ENCODE measurements at regions of chr3 and their contacts with region 1.

Region 1: DNA sequence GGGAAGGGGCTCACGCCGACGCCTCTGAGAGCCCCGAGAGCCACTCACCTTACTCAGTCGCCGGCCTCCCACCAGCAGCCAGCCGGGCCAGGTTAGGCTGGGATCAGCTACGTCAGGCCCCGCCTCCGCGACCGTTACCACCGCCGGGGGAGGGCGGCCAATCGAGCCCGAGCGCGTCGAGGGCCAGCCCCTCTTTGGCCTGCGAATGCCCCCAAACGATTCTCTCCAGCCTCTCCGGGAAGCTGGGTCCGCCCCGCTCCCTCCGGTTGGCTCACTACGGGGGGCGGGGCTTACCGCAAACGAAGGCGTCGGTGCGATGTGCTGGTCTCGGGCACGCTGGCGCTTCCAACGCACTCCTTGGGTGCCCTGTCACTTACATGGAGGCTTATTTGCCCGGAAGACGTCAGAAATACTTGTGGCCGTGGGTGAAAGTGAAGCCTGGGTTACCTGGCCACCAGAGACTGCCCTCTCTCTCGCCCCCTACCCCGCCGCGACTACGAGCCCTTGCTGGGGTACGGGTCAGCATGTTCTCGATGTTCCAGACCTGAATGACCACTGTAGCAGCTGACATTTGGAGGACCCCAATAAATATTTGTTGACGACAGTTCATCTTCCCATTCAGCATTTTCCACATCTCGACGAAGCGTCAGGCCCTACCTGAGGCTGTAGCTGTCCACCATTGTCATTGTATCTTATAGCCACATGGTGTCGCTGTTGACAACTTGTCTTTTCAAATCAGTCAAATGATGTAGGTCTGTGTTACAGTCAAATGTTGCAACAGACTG is at the start of gene CEP70:
- DNase-seq: peak; percentile 96
- H3K4me3 Mint-ChIP-seq: peak within 1 kb of the TSS; percentile 88
- H3K27ac Mint-ChIP-seq: peak within 1 kb of the TSS; percentile 92
- H3K4me1 Mint-ChIP-seq: peaks cover 8% of the 10 kb centered on the region
- H3K27me3 Mint-ChIP-seq: no peaks in the 10 kb centered on the region
- total RNA-seq, gene CEP70: 3.7 and 4.8 TPM in 2 replicates

Region 2: DNA sequence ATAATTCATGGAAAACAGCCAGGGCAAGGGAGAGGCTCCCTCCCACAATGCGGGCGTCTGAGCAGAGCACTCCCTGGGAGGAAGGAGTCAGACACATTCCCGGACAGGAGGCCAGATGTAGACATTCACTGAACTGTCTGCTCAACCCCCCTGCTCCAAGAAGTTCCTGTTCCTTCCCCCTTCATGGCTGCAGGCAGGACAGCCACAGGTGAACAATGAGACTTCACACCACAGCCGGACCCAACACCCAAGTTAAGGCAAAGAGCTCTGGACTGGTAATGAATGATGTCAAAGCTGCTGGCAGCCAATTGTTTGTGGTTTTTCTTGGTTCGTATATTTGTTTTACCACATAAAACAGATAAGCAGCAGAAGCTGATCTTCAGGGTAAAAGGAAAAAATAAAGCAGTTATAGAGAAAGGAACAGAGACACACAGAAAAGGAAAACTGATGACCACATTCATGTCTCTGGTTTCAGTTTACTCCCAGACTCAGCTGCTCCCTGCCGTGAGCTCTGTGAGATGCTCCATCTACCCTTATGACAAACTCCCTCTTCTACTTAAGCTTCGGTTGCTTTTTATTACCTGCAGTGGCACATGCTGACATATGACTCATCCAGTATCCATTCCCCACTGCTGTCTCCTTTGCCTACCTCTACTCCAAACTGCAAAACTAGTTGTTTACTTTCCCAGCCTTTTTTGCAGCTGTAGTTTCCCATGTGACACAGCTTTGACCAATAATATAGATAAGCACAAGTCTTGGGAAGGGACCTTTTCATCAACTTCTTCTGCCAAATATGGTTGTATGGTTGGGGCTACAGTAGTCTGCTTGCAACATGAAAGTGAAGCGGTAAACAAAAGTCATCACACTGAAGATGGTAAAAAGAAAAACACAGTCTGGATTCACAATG is 512.0 kb before region 1 on chr3:
- intact Hi-C with region 1: loop called (anchors 10 kb)
- DNase-seq: peak; percentile 72
- H3K4me3 Mint-ChIP-seq: peak overlapping the region; percentile 36
- H3K27ac Mint-ChIP-seq: peak overlapping the region; percentile 45
- H3K4me1 Mint-ChIP-seq: peaks cover 38% of the 10 kb centered on the region
- H3K27me3 Mint-ChIP-seq: peaks cover 2% of the 10 kb centered on the region

Region 3: DNA sequence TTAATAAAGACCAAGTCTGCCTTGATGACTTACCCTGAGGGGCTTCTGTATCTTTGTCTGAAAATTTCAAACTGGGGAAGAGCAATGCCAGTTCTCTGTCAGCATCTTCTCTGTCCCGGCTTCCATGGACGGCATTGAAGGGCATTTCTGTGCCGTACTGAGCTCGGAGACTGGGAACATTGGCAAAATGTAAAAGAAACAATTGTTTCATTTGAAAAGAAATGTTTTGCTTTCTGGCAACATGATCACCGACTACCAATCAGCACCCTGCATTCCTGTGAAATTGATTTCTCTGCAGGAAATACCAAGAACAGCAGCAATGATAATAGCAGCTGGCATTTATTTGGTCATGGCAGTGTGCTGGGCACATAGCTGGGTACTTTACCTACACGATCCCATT is 290.9 kb before region 1 on chr3:
- intact Hi-C with region 1: no loop called
- DNase-seq: no peak
- H3K4me3 Mint-ChIP-seq: no peak overlapping the region
- H3K27ac Mint-ChIP-seq: no peak overlapping the region
- H3K4me1 Mint-ChIP-seq: no peaks in the 10 kb centered on the region
- H3K27me3 Mint-ChIP-seq: no peaks in the 10 kb centered on the region

Region 4: DNA sequence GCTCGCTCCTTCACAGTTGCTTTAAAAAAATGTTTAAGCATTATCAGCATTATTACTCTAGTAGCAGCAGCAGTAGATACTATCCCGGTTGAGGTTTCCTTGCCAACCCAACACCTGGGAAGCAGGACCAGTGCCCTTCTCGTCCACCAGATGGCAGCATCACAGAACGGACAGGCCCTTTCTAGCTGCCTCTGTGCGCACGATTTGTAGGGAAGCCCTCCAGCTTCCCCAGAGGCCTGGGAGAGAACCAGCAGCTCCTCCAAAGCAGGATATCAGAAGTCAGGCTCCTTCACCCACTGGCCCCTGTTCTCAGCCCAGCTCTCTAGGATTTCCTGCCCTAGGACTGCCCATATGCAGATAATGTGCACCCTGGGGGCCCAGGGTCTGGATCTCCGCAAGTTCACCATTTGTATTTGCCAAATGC is 176.8 kb before region 1 on chr3:
- intact Hi-C with region 1: loop called (anchors 5 kb)
- DNase-seq: peak; percentile 88
- H3K4me3 Mint-ChIP-seq: no peak overlapping the region
- H3K27ac Mint-ChIP-seq: no peak overlapping the region
- H3K4me1 Mint-ChIP-seq: peaks cover 2% of the 10 kb centered on the region
- H3K27me3 Mint-ChIP-seq: peaks cover 11% of the 10 kb centered on the region

Region 5: GRCh38 chr3:138608322-138609135 is 14.2 kb after region 1 on chr3 and contains the start of gene FAIM:
- intact Hi-C with region 1: loop called (anchors 1 kb)
- DNase-seq: no peak
- H3K4me3 Mint-ChIP-seq: peak within 1 kb of the TSS; percentile 80
- H3K27ac Mint-ChIP-seq: peak within 1 kb of the TSS; percentile 85
- H3K4me1 Mint-ChIP-seq: peaks cover 8% of the 10 kb centered on the region
- H3K27me3 Mint-ChIP-seq: no peaks in the 10 kb centered on the region
- total RNA-seq, gene FAIM: 1.7 and 2.4 TPM in 2 replicates

Region 6: DNA sequence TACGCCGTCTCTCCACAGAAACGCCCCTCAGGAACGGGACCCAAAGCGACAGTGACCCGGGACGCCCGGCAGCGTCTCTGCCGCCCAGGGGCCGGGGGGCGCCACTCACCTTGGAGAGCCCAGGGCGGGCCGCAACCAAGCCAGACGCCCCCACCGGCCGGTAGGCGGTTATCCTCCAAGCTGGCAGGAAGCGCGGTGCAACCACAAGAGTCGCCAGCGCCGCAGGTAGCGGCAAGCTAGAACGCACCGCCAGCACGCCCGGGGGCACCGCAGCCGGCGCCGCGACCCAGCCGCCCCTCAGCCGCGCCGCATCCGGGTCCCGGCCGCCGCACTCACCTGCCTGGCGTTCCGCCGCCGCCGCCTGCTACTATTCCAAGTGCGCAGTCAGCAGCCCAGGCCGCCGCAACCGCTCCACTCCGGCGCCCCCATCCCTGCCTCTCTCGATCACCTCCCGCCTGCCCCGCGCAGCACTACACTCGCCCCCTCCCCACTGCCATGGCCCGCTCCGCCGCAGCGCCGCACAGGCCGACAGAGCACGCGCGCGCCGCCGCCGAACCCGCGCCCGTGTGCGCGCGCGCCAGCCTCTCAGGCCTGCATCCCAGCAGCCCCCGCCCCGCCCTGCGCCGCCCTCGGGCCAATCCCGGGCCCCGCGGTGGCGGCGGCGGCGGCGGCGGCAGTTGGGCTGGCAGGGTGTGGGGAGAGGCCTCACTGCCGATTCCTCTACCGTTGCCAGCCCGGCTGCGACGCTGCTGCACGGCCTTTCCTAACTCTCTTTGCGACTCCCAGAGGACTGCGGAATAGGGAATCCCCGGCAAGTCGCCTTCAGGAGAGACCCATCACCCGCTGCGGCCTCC is 240.2 kb after region 1 on chr3 and contains the start of gene PIK3CB:
- intact Hi-C with region 1: loop called (anchors 2 kb)
- DNase-seq: peak; percentile 96
- H3K4me3 Mint-ChIP-seq: peak within 1 kb of the TSS; percentile 93
- H3K27ac Mint-ChIP-seq: peak within 1 kb of the TSS; percentile 93
- H3K4me1 Mint-ChIP-seq: peaks cover 20% of the 10 kb centered on the region
- H3K27me3 Mint-ChIP-seq: no peaks in the 10 kb centered on the region
- total RNA-seq, gene PIK3CB: 17.6 and 18.1 TPM in 2 replicates

Region 7: GRCh38 chr3:139353920-139354556 is 759.7 kb after region 1 on chr3:
- intact Hi-C with region 1: loop called (anchors 10 kb)
- DNase-seq: no peak
- H3K4me3 Mint-ChIP-seq: no peak overlapping the region
- H3K27ac Mint-ChIP-seq: no peak overlapping the region
- H3K4me1 Mint-ChIP-seq: peaks cover 16% of the 10 kb centered on the region
- H3K27me3 Mint-ChIP-seq: no peaks in the 10 kb centered on the region